CD4-positive, alpha-beta memory T cell (primary cell): ENCODE measurements at regions of chr11 and their contacts with region 1.

Region 1: GRCh38 chr11:3841426-3842350 is 929 bp upstream of the RHOG start:
- DNase-seq: peak; percentile 94 to 99 (median 96)
- H3K4me3 ChIP-seq: peak overlapping the region in 1 of 2 donors; percentile 75
- H3K4me3 Mint-ChIP-seq: peak overlapping the region; percentile 86 to 96 (median 88)
- H3K27ac ChIP-seq: peak overlapping the region; percentile 95
- H3K27ac Mint-ChIP-seq: peak overlapping the region; percentile 95 to 99 (median 98)
- H3K4me1 ChIP-seq: peaks cover 34% of the 10 kb centered on the region
- H3K4me1 Mint-ChIP-seq: peaks cover 23 to 57% (median 37%) of the 10 kb centered on the region in 4 donors
- H3K27me3 ChIP-seq: no peaks in the 10 kb centered on the region
- H3K27me3 Mint-ChIP-seq: peaks cover 0 to 3% of the 10 kb centered on the region in 2 donors

Region 2: GRCh38 chr11:3767536-3767935 is 74.2 kb before region 1 on chr11:
- CTCF ChIA-PET with region 1: no interaction called
- POLR2A ChIA-PET with region 1: no interaction called
- intact Hi-C with region 1: no loop called
- DNase-seq: no peak
- H3K4me3 ChIP-seq: no peak overlapping the region
- H3K4me3 Mint-ChIP-seq: no peak overlapping the region
- H3K27ac ChIP-seq: no peak overlapping the region
- H3K27ac Mint-ChIP-seq: no peak overlapping the region
- H3K4me1 ChIP-seq: no peaks in the 10 kb centered on the region
- H3K4me1 Mint-ChIP-seq: peaks cover 0 to 3% (median under 1%) of the 10 kb centered on the region in 4 donors
- H3K27me3 ChIP-seq: no peaks in the 10 kb centered on the region
- H3K27me3 Mint-ChIP-seq: no peaks in the 10 kb centered on the region

Region 3: DNA sequence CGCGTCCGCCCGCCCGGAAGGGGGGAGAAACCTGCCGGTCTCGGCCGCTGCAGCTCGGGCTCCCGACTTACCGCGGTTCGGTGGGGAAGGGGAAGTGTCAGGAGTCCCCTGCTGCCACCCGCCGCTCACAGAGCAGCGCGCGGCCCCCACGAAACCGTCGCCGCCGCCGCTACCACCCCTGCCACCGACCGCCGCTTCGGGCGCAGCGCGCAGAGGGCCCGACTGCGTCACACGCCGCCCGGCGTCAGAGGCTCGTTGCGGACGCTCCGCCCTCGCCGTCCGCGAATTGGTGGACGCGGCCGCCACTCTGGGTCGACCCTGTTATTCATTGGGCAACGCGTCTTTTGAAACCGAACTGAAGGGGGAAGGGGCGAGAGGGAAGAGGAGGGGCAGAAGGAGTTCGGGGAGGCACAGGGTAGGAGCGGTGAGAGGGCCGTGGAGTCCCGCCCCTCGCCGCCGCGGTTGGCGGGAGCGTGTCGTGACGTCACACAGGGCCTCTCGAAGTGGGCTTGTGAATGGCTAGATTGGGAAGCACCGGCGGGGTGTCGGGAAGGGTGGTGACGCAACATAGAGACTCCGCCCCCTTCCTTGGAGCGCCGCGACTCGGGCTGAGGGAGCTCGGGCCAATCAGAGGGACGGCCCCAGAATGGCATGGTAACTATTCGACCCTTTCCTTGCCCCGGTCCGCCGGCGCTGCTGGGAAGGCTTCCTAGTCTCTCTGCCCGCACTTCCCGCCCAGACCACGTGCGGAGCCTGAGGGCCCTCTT is 44.2 kb before region 1 on chr11 and contains the start of gene NUP98:
- CTCF ChIA-PET with region 1: interaction called, 11 read pairs
- POLR2A ChIA-PET with region 1: interaction called, 91 read pairs
- intact Hi-C with region 1: loop called (anchors 1 kb)
- DNase-seq: peak; percentile 100
- H3K4me3 ChIP-seq: peak within 1 kb of the TSS; percentile 89 to 98
- H3K4me3 Mint-ChIP-seq: peak within 1 kb of the TSS; percentile 91 to 98 (median 96)
- H3K27ac ChIP-seq: peak within 1 kb of the TSS; percentile 99
- H3K27ac Mint-ChIP-seq: peak within 1 kb of the TSS; percentile 96 to 100 (median 99)
- H3K4me1 ChIP-seq: peaks cover 42% of the 10 kb centered on the region
- H3K4me1 Mint-ChIP-seq: peaks cover 26 to 61% (median 45%) of the 10 kb centered on the region in 4 donors
- H3K27me3 ChIP-seq: no peaks in the 10 kb centered on the region
- H3K27me3 Mint-ChIP-seq: no peaks in the 10 kb centered on the region
- total RNA-seq, gene NUP98: 109 to 112 TPM

Region 4: GRCh38 chr11:3817181-3817800 is 24.4 kb before region 1 on chr11:
- CTCF ChIA-PET with region 1: interaction called, 151 read pairs
- POLR2A ChIA-PET with region 1: interaction called, 221 read pairs
- intact Hi-C with region 1: no loop called
- DNase-seq: no peak
- H3K4me3 ChIP-seq: no peak overlapping the region
- H3K4me3 Mint-ChIP-seq: no peak overlapping the region
- H3K27ac ChIP-seq: no peak overlapping the region
- H3K27ac Mint-ChIP-seq: peak overlapping the region in 1 of 7 donors; percentile 31
- H3K4me1 ChIP-seq: no peaks in the 10 kb centered on the region
- H3K4me1 Mint-ChIP-seq: no peaks in the 10 kb centered on the region
- H3K27me3 ChIP-seq: no peaks in the 10 kb centered on the region
- H3K27me3 Mint-ChIP-seq: no peaks in the 10 kb centered on the region

Region 5: GRCh38 chr11:3939211-3939610 is 97.5 kb after region 1 on chr11:
- CTCF ChIA-PET with region 1: interaction called, 12 read pairs
- POLR2A ChIA-PET with region 1: interaction called, 36 read pairs
- intact Hi-C with region 1: no loop called
- DNase-seq: no peak
- H3K4me3 ChIP-seq: no peak overlapping the region
- H3K4me3 Mint-ChIP-seq: no peak overlapping the region
- H3K27ac ChIP-seq: no peak overlapping the region
- H3K27ac Mint-ChIP-seq: peak overlapping the region; percentile 9 to 82 (median 77)
- H3K4me1 ChIP-seq: peaks cover 70% of the 10 kb centered on the region
- H3K4me1 Mint-ChIP-seq: peaks cover 63 to 85% (median 75%) of the 10 kb centered on the region in 4 donors
- H3K27me3 ChIP-seq: no peaks in the 10 kb centered on the region
- H3K27me3 Mint-ChIP-seq: no peaks in the 10 kb centered on the region

Region 6: DNA sequence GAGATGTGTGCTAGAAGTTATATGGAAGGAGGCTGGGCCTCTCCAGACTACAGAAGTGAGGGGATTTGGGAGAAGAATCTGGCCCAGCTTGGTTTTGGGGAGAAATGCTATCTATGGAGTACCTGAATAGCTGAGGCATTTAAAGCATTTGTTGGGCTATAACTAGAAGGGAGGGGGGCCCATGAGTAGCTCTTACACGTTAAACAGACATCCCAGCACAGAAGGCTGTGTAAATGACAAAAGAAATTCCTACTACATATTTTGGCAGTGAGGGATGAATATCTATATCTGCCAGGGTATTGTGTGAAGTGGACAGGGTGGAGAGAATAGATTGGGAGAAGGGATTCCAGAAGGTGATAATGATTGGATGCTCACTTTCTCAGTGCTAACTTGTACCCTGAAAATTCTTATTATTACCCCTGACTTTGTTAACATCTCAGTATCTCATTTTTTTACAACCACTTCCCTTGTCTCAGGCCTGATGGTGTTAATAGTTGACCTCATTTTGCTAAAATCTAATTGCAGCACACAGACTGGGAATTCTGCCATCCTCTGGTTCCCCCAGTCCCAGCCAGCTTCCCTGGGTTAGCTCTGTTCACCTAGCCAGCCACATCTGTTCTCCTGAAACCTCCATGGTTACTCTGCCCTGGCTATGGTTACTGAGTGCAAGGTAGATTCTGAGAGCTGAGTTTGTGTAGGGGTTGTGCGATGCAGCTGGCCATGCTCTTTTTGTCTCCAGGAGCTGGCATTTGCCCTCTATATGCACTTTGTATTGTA is 224.1 kb after region 1 on chr11:
- CTCF ChIA-PET with region 1: interaction called, 934 read pairs
- POLR2A ChIA-PET with region 1: interaction called, 21 read pairs
- intact Hi-C with region 1: no loop called
- DNase-seq: no peak
- H3K4me3 ChIP-seq: no peak overlapping the region
- H3K4me3 Mint-ChIP-seq: peak overlapping the region in 3 of 8 donors; percentile 14 to 61 (median 48)
- H3K27ac ChIP-seq: no peak overlapping the region
- H3K27ac Mint-ChIP-seq: peak overlapping the region; percentile 60 to 93 (median 80)
- H3K4me1 ChIP-seq: peaks cover 65% of the 10 kb centered on the region
- H3K4me1 Mint-ChIP-seq: peaks cover 63 to 75% (median 67%) of the 10 kb centered on the region in 4 donors
- H3K27me3 ChIP-seq: no peaks in the 10 kb centered on the region
- H3K27me3 Mint-ChIP-seq: no peaks in the 10 kb centered on the region